Mammary epithelial cell (primary cell): ENCODE measurements at regions of chr15 and their contacts with region 1.

Region 1: DNA sequence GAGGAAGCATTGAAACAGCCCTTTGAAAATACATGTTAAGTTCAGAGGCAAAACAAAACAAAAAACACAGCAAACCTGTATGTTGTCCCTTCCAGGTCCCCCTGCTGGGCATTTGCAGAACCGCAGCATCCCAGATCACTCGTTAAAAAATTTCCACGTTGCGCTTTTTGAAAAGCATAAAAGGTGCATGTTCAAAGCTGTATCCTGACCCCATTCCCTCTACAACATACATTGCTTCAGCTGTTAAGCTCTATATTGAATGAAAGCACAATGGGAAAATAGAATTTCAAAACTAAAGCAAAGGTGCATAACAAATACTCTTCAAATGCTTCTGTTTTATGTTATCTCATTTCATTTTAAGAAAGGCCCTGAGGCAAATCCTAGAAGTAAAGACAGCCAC is 328.3 kb downstream of the THSD4 start:
- DNase-seq: no peak
- H3K4me3 ChIP-seq: no peak overlapping the region
- H3K27ac ChIP-seq: peak overlapping the region; percentile 99
- H3K4me1 ChIP-seq: peaks cover 66% of the 10 kb centered on the region
- H3K27me3 ChIP-seq: no peaks in the 10 kb centered on the region
- CTCF ChIP-seq: peak; percentile 78 to 89

Region 2: GRCh38 chr15:70892002-70892914 is 551.3 kb before region 1 on chr15 and contains the starts of genes LRRC49 and THAP10:
- CTCF ChIA-PET with region 1: no interaction called
- dilution Hi-C with region 1: no loop called
- in situ Hi-C with region 1: no loop called
- intact Hi-C with region 1: loop called (anchors 1 kb)
- DNase-seq: peak; percentile 97
- H3K4me3 ChIP-seq: peak within 1 kb of the TSS; percentile 80 to 88 (median 85)
- H3K27ac ChIP-seq: peak within 1 kb of the TSS; percentile 79
- H3K4me1 ChIP-seq: peaks cover 13% of the 10 kb centered on the region
- H3K27me3 ChIP-seq: no peaks in the 10 kb centered on the region
- CTCF ChIP-seq: peak in 1 of 2 donors; percentile 0
- total RNA-seq, gene LRRC49: 9.0 to 21.2 TPM
- total RNA-seq, gene THAP10: 3.0 to 4.9 TPM

Region 3: DNA sequence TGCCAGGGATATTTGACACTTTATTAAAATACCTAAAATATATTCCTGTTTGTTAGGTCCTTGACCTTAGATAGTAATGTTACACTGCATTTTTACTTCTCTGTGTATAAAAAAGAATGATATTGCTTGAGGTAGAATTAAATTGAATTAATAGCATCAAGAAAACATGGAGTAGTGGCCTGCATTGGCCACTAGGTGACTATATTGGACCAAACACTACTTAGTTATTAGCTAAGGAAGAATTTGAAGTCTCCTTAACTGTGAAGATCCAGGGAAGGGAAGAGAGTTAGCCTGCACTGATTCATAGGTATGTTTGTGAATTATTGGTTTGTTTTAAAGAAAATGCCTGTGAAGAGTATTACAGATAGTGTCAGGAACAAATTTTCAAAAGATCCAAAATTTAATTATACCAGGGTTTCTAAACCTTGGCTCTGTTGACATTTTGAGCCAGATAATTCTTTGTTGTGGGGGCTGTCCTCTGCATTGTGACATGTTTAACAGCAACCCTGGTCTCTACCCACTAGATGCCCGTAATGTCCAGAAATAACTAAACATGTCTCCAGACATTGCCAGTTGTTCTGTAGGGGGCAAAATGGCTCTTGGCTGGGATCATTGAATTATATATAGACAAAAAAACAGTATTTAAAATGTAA is 431.9 kb before region 1 on chr15:
- CTCF ChIA-PET with region 1: interaction called, 3 read pairs
- dilution Hi-C with region 1: no loop called
- in situ Hi-C with region 1: loop called in 1 of 2 experiments (anchors 5 kb)
- intact Hi-C with region 1: loop called (anchors 1 kb)
- DNase-seq: peak; percentile 57
- H3K4me3 ChIP-seq: no peak overlapping the region
- H3K27ac ChIP-seq: peak overlapping the region; percentile 46
- H3K4me1 ChIP-seq: peaks cover 15% of the 10 kb centered on the region
- H3K27me3 ChIP-seq: no peaks in the 10 kb centered on the region
- CTCF ChIP-seq: peak; percentile 91 to 95

Region 4: DNA sequence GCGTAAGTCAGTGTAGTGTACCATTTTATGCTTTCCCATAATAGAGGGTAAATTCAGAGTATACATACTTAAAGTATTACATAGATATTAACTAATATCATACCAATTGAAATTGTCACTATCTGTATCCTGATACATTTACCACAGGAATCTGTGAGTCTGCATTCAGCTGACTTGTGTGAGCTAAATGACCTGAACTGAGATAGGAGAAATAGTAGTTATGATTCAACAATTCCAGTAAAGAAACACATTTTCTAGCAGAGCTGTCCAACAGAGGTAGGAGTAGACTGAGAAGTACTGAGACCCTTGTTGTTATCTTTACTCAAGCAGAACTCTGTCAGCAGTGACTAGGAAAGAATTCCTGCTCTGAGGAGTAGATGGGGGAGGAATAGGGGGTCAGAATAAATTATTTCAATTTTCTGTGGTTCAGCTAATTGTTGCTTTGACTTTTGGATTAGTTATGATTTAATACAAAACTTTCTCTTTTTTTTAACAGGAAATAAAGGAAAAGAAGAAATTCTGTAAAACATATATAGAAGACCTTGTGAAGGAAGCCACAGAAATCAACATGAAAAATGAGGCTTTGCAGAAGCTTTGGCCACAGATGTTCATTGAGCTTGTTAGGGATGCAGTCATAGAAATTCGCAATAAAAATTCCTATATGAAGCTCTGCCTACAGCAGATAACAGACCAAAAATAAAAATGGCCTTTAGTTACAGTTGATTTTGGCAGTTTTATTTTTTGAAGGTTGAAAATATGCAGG is 394.4 kb before region 1 on chr15:
- CTCF ChIA-PET with region 1: interaction called, 3 read pairs
- dilution Hi-C with region 1: no loop called
- in situ Hi-C with region 1: no loop called
- intact Hi-C with region 1: loop called (anchors 2 kb)
- DNase-seq: peak; percentile 87
- H3K4me3 ChIP-seq: no peak overlapping the region
- H3K27ac ChIP-seq: peak overlapping the region; percentile 96
- H3K4me1 ChIP-seq: peaks cover 63% of the 10 kb centered on the region
- H3K27me3 ChIP-seq: no peaks in the 10 kb centered on the region
- CTCF ChIP-seq: no peak

Region 5: DNA sequence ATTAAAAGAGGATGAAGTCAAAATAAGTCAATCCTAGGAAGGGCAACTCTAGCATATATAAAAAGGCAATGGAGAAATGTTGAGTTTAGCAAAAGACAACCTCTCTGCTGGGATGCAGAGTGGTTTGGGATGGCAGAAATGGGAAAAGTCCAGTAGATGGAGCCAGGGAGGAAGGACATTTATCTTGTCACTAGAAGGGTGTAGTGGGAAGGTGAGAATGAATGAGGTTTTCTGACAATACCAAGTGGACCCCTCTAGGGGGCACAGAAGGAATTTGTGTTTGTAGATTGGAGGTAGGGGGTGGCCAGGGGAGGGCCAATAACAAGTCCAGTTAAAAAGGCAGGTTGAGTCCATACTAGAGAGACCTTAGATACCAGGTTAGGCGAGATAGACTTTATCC is 248.3 kb before region 1 on chr15:
- CTCF ChIA-PET with region 1: no interaction called
- dilution Hi-C with region 1: no loop called
- in situ Hi-C with region 1: no loop called
- intact Hi-C with region 1: loop called (anchors 1 kb)
- DNase-seq: no peak
- H3K4me3 ChIP-seq: no peak overlapping the region
- H3K27ac ChIP-seq: no peak overlapping the region
- H3K4me1 ChIP-seq: peaks cover 3% of the 10 kb centered on the region
- H3K27me3 ChIP-seq: no peaks in the 10 kb centered on the region
- CTCF ChIP-seq: peak; percentile 10 to 55

Region 6: GRCh38 chr15:71237456-71238188 is 205.9 kb before region 1 on chr15:
- CTCF ChIA-PET with region 1: no interaction called
- dilution Hi-C with region 1: no loop called
- in situ Hi-C with region 1: no loop called
- intact Hi-C with region 1: loop called (anchors 5 kb)
- DNase-seq: peak; percentile 96
- H3K4me3 ChIP-seq: no peak overlapping the region
- H3K27ac ChIP-seq: peak overlapping the region; percentile 57
- H3K4me1 ChIP-seq: peaks cover 11% of the 10 kb centered on the region
- H3K27me3 ChIP-seq: no peaks in the 10 kb centered on the region
- CTCF ChIP-seq: no peak

Region 7: DNA sequence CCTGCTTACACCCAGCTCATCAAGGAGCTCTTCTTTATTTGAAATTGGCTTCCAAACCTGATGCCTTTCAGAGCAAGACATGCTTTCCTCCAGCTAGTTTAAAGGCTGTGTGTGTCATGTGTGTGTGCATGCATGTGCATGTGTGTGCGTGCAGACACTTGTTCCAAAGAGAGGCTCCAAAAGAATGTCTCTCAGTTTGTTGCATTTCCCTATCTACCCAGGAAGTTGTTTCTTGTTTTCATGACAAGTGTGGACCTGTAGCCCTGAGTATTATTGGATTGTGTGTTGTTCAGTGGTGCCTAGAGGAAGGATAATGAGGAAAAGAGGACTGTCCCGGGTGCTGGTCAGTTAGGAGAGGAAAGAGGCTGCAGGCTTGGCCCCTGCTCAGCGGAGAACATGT is 88.3 kb before region 1 on chr15:
- CTCF ChIA-PET with region 1: no interaction called
- dilution Hi-C with region 1: no loop called
- in situ Hi-C with region 1: no loop called
- intact Hi-C with region 1: no loop called
- DNase-seq: peak; percentile 76
- H3K4me3 ChIP-seq: no peak overlapping the region
- H3K27ac ChIP-seq: peak overlapping the region; percentile 27
- H3K4me1 ChIP-seq: peaks cover 9% of the 10 kb centered on the region
- H3K27me3 ChIP-seq: no peaks in the 10 kb centered on the region
- CTCF ChIP-seq: no peak

Region 8: DNA sequence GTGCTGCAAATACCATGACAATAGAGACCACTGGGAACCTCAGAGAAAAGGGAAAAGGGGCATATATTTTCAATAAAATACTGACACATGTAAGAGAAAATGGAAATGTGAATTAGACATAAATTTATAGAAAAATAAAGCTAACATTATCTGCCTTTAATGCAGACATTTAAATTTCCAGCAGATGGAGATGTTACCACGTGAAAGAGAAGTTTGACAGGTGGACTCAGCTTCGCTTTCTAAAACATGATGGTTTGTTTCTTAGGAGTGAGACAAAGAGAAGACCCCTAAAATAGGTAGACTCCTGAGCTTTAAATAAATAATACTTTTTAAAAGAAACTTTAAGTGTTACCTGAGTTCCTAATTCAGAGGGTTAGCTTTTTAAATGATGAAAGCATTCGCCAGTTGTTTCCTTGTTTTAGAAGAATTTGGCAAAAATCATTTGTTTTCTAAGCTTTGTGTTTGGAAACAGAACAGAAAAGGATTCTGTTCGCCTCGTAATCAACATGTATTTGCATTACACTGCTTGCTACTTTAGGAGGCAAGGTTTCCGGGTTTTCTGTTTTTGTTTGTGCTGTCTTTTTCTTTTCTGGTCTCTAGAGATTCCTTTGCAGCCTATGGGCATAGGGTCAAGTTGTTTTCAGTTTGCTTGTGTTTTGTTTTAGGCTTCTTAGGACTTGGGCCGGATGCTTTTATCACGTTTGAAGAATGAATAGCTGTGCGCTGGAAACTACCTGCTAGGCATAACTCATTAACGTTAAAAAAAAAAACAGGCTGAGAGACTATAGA is 56.9 kb before region 1 on chr15:
- CTCF ChIA-PET with region 1: no interaction called
- dilution Hi-C with region 1: no loop called
- in situ Hi-C with region 1: no loop called
- intact Hi-C with region 1: loop called (anchors 5 kb)
- DNase-seq: no peak
- H3K4me3 ChIP-seq: no peak overlapping the region
- H3K27ac ChIP-seq: no peak overlapping the region
- H3K4me1 ChIP-seq: no peaks in the 10 kb centered on the region
- H3K27me3 ChIP-seq: no peaks in the 10 kb centered on the region
- CTCF ChIP-seq: peak; percentile 27 to 38